ENCODE measurements at regions of chr1 and their contacts with region 1.

Region 1: DNA sequence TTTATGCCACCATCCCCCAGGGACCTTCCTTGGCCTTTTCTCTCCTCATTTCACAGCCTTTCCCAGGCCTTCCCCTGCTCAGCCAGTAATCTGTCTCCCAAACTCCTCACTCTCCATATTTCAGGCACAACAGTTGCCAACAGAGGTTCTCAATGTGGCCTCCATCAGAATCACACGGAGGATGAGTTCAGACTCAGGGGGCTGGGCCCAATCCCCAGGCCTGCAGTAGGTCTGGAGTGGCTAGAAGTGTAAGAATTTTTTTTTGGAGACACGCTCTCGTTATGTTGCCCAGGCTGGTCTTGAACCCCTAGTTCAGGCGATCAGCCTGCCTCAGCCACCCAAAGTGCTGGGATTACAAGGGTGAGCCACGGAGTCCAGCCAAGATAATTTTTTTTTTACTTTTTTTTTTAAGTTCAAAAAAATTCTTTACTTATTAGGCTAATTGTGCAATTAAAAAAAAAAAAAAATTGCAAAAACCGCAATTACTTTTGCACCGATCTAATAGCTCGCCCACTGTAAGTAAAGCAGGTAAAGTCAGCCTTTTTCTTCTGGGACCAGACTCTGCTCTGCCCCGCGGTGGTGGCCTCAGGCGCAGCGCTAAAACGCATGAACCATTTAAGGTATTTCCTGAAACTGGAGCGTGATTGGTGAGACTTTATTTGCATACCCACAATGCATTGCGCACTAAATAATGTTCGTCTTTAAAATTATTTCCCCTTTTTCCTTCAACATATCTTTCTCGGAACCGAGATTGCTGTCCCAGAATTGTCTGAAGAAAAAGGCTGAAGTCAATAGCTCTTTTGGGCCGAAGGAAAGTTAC is 18.7 kb downstream of the KIAA2013 start:
- DNase-seq: peak; percentile 74
- ATAC-seq: peak; percentile 47
- H3K4me3 Mint-ChIP-seq: peak overlapping the region; percentile 94
- H3K27ac Mint-ChIP-seq: peak overlapping the region; percentile 100
- H3K4me1 Mint-ChIP-seq: peaks cover 21% of the 10 kb centered on the region
- H3K27me3 Mint-ChIP-seq: no peaks in the 10 kb centered on the region
- CTCF ChIP-seq: no peak

Region 2: DNA sequence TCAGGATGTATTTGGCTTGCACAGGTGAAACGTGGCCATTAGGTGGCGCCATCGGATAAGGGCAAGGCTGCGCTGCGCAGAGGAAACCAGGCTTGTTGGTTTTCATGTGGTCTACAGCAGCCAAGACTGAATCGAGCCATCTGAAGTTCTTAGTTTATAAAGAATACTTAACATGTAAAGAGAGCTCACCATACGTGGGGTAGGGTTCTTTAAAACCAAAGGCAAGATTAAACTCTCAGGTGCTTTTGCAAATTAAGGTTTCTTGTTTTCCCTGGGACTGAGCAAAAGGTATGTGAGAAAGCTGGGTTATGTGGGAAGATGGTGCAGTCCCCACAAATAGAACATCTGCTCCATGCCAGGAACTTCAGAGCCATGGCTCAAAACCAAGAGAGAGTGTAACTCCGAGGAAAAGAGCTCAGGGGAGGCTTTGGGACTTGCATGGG is 869.7 kb before region 1 on chr1:
- CTCF ChIA-PET with region 1: interaction called, 4 read pairs
- POLR2A ChIA-PET with region 1: interaction called, 14 read pairs
- intact Hi-C with region 1: no loop called
- DNase-seq: peak; percentile 72
- ATAC-seq: peak; percentile 96
- H3K4me3 Mint-ChIP-seq: no peak overlapping the region
- H3K27ac Mint-ChIP-seq: no peak overlapping the region
- H3K4me1 Mint-ChIP-seq: peaks cover 4% of the 10 kb centered on the region
- H3K27me3 Mint-ChIP-seq: peaks cover 6% of the 10 kb centered on the region
- CTCF ChIP-seq: peak; percentile 57

Region 3: DNA sequence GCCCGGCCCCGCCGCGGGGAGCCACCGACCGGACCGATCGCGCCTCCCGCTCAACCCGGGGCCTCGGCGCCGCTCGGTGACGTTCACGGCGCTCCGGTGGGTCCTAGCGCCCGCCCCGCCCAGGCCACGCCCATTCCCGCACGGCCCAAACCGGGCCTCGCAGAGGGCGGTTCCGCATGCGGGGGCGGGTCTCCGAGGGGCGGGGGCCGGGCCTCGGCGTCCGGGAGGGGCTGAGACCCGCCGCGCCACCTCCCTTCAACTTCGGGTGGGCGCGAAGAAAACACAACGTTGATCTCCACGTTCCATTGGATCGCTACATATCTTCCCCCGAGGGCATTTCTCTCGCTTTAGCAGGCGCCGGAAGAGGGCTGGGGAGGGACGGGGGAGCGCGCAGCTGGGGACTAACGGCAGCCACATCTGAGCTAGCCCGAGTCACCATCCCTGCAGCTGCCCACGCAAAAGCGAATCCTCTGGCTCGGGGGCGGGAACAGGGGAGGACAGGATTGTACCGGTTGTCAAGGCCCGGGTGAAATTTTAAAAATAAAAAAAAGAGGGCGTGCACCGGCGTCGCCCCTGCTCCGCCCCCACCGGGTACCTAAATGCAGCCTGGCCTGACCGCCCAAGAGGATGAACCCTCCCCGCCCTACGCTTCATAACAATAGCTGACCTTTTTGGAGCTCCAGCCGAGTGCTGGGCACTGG is 226.3 kb before region 1 on chr1 and contains the start of gene MAD2L2:
- CTCF ChIA-PET with region 1: no interaction called
- POLR2A ChIA-PET with region 1: interaction called, 38 read pairs
- intact Hi-C with region 1: loop called (anchors 1 kb)
- DNase-seq: peak; percentile 93
- ATAC-seq: peak; percentile 90
- H3K4me3 Mint-ChIP-seq: peak within 1 kb of the TSS; percentile 92
- H3K27ac Mint-ChIP-seq: peak within 1 kb of the TSS; percentile 88
- H3K4me1 Mint-ChIP-seq: peaks cover 22% of the 10 kb centered on the region
- H3K27me3 Mint-ChIP-seq: no peaks in the 10 kb centered on the region
- CTCF ChIP-seq: no peak
- total RNA-seq, gene MAD2L2: 34.4 and 34.9 TPM in 2 replicates

Region 4: GRCh38 chr1:11838349-11839272 is 68.9 kb before region 1 on chr1:
- CTCF ChIA-PET with region 1: interaction called, 11 read pairs
- POLR2A ChIA-PET with region 1: interaction called, 89 read pairs
- intact Hi-C with region 1: loop called (anchors 1 kb)
- DNase-seq: peak; percentile 66
- ATAC-seq: peak; percentile 92
- H3K4me3 Mint-ChIP-seq: no peak overlapping the region
- H3K27ac Mint-ChIP-seq: no peak overlapping the region
- H3K4me1 Mint-ChIP-seq: peaks cover 27% of the 10 kb centered on the region
- H3K27me3 Mint-ChIP-seq: no peaks in the 10 kb centered on the region
- CTCF ChIP-seq: peak; percentile 28

Region 5: GRCh38 chr1:11940260-11940921 is 32.9 kb after region 1 on chr1:
- CTCF ChIA-PET with region 1: no interaction called
- POLR2A ChIA-PET with region 1: interaction called, 184 read pairs
- intact Hi-C with region 1: no loop called
- DNase-seq: no peak
- ATAC-seq: no peak
- H3K4me3 Mint-ChIP-seq: no peak overlapping the region
- H3K27ac Mint-ChIP-seq: no peak overlapping the region
- H3K4me1 Mint-ChIP-seq: no peaks in the 10 kb centered on the region
- H3K27me3 Mint-ChIP-seq: no peaks in the 10 kb centered on the region
- CTCF ChIP-seq: no peak

Region 6: DNA sequence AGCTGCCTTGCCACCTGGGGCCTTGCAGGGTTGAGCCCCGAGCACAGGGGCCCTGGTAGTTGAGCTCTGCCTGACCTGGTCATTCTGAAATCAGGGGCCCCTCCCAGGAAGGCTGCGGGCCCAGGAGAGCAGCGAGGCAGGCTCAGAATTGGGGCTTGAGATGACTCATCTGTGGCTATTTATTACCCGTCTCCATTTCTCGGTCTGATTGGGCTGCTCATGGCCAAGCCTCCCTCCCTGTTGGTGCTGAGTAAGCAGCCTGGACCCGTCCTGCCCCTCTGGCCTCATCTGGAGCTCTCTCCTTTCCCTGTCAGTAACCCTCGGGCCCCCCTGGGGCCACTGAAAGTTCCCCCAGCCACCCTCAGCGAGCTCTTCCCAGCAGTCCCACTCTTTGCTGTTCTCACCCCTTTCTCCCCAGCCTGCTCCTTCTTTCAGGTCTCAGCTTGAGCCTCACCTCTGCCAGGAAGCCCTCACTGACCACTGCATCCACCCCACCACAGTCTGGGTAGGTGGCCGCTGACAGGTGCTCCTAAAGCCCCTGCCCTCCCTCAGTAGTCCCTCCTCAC is 144.6 kb after region 1 on chr1:
- CTCF ChIA-PET with region 1: no interaction called
- POLR2A ChIA-PET with region 1: interaction called, 34 read pairs
- intact Hi-C with region 1: no loop called
- DNase-seq: peak; percentile 45
- ATAC-seq: peak; percentile 84
- H3K4me3 Mint-ChIP-seq: peak overlapping the region; percentile 57
- H3K27ac Mint-ChIP-seq: peak overlapping the region; percentile 77
- H3K4me1 Mint-ChIP-seq: peaks cover 26% of the 10 kb centered on the region
- H3K27me3 Mint-ChIP-seq: no peaks in the 10 kb centered on the region
- CTCF ChIP-seq: no peak

Region 7: GRCh38 chr1:12208764-12209494 is 301.4 kb after region 1 on chr1:
- CTCF ChIA-PET with region 1: no interaction called
- POLR2A ChIA-PET with region 1: interaction called, 22 read pairs
- intact Hi-C with region 1: no loop called
- DNase-seq: peak; percentile 81
- ATAC-seq: peak; percentile 71
- H3K4me3 Mint-ChIP-seq: peak overlapping the region; percentile 52
- H3K27ac Mint-ChIP-seq: peak overlapping the region; percentile 86
- H3K4me1 Mint-ChIP-seq: peaks cover 64% of the 10 kb centered on the region
- H3K27me3 Mint-ChIP-seq: no peaks in the 10 kb centered on the region
- CTCF ChIP-seq: peak; percentile 76